ENCODE measurements at regions of chr2 and their contacts with region 1.

Region 1: DNA sequence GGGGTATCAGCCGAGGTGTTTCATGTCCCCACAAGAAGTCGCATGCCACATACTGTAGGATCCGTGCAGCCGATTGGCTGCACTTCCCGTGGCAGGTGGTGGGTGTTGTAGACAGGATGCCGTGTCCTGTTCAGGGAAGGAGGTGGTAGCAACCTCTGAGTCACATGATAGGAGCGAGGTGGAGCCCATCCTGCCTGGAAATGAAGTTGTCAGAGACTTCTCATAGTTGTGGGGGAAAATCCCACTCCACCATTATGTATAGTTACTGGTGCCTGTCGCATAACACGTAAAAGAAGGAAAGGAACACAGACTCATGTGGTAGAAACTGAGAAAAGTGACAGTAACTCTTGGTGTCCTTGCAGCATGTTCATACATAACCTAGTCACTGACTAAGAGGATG is 91.4 kb upstream of the IL1R2 start:
- DNase-seq: peak; percentile 9
- H3K4me3 Mint-ChIP-seq: peak overlapping the region; percentile 40
- H3K27ac Mint-ChIP-seq: no peak overlapping the region
- H3K4me1 Mint-ChIP-seq: peaks cover 11% of the 10 kb centered on the region
- H3K27me3 Mint-ChIP-seq: no peaks in the 10 kb centered on the region

Region 2: DNA sequence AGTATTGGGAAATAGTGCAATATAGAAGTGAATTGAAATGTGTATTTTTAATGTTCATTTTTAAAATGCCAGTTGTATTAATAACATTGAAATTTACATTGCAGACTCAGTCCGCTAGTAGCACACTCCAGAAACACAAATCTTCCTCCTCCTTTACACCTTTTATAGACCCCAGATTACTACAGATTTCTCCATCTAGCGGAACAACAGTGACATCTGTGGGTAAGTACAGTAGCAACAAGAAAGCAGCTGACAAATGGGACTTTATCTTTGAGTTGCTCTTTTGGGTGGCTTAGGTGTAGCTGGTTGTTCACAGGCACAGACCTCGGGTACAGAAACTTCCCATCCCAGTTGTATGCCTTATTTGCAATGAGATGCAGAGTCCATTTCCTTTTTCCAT is 26.8 kb before region 1 on chr2:
- intact Hi-C with region 1: no loop called
- DNase-seq: no peak
- H3K4me3 Mint-ChIP-seq: no peak overlapping the region
- H3K27ac Mint-ChIP-seq: peak overlapping the region; percentile 20
- H3K4me1 Mint-ChIP-seq: peaks cover 8% of the 10 kb centered on the region
- H3K27me3 Mint-ChIP-seq: no peaks in the 10 kb centered on the region

Region 3: DNA sequence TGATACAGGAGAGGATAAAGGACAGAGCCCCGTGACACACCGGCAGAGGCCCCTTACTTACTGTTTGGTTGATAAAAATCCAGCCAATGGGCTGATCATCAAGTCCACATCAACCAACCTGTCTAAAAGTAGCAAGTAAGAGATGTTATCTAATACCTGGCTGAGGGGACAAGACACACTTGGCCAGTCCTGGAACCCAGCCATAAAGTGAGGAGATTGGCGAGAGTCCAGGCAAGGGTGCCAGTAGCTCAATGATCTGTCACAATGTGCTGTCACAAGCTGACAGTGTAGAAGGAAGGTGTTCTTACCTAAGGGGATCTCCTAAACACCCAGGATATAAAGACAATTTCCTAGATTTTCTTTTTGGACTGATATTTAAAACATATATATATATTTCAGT is 29.6 kb after region 1 on chr2:
- intact Hi-C with region 1: loop called (anchors 1 kb)
- DNase-seq: no peak
- H3K4me3 Mint-ChIP-seq: no peak overlapping the region
- H3K27ac Mint-ChIP-seq: no peak overlapping the region
- H3K4me1 Mint-ChIP-seq: peaks cover 7% of the 10 kb centered on the region
- H3K27me3 Mint-ChIP-seq: no peaks in the 10 kb centered on the region

Region 4: GRCh38 chr2:101949304-101949703 is 48.9 kb after region 1 on chr2:
- intact Hi-C with region 1: loop called (anchors 5 kb)
- DNase-seq: no peak
- H3K4me3 Mint-ChIP-seq: no peak overlapping the region
- H3K27ac Mint-ChIP-seq: no peak overlapping the region
- H3K4me1 Mint-ChIP-seq: peaks cover 5% of the 10 kb centered on the region
- H3K27me3 Mint-ChIP-seq: peaks cover 3% of the 10 kb centered on the region

Region 5: DNA sequence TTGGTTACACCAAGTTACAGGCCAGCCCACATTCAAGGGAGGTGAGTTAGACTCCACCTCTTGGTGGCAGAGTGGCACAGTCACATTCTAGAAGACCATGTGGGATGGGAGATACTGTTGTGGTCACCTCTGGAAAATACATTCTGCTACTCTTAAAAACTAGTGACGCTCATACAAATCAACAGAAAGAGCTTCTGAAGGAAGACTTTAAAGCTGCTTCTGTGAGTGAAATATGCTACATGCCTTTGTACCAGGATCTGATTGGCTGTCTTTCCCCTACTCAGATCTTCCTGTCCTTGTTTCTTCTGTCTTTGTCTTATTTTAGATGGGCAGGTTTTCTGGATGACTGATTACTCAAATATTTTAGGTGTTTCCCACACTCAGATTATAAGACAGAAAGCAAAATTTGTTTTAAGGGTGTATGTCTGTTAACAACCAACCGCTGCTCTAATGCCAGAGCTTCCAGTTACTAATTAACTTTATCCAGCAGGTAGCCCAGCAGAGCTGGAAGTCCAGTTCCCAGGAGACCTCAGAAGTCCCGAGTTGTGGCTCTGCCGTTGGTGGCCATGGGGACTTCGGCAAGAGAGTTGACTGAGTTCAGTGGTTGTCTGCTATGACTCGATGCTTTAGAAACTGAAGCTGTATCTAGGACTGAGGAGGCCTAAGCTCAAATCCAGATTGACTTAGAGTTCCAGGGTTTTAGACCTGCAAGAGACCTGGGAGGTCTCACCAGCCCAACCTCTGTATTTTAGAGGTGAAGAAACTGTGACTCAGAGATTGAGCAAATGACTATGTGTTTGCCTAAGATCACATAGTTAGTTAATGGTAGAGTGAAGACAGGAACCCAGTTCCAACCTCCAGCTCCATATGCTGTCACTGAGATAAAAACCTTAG is 98.8 kb after region 1 on chr2:
- intact Hi-C with region 1: loop called (anchors 1 kb)
- DNase-seq: no peak
- H3K4me3 Mint-ChIP-seq: no peak overlapping the region
- H3K27ac Mint-ChIP-seq: peak overlapping the region; percentile 76
- H3K4me1 Mint-ChIP-seq: peaks cover 27% of the 10 kb centered on the region
- H3K27me3 Mint-ChIP-seq: peaks cover 4% of the 10 kb centered on the region